ENCODE measurements at regions of chr3 and their contacts with region 1.

Region 1: DNA sequence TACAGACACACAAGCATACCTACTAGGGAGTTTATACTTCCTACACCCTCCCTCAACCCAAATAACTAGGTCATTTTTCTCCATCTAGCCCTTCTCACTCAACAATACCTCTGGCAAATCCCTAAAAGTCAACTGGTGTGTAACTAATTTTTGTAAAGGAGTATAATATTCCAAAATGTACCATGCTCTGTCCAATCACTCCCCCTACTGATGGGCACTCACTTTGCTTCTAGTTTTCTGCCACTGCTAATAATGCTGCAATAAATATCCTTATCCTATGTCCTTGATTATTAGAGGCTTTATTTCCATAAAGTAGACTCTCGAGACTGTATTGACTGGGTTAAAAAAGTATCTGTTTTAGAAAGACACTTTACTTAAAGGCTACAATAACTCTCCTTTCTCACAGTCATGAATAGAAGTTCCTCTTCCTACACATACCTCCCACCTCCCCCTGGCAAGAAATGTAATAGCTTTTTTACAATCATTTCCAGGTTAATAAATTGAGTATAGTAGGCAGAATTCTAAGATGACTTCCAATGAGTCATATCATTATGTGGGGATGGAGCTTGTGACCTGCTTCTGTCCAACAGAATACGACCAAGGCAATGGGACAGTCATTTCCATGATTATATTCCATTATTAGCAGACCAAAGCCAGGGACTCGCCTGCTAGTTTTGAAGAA is 30.0 kb downstream of the SHQ1 start:
- DNase-seq: no peak
- ATAC-seq: no peak

Region 2: DNA sequence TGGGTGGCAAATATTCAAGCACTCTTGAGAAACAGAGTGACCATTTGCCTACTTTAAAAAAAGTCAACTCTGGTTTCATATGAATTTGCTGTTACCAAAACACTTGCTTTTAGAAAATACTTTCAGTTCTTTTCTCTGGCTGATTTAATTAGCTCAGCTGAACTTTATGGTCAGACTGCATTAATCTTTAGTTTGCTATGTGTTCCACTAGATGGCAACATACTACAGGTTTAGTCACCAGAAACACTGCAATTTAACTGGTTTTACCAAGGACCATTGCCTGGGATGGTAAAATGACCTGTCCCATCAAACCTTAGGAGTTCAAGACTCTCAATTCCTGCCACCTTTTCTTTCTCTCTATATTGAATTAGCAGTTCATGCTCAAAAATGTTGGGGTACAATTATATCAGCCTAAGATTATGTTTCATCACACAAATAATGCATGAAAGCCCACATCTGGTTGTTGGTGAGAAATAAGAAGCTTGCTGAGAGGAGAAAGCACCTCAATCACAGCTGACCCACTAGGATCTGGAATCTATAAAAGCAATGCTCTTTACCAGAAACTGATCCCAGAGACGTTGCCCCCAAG is 1107.2 kb before region 1 on chr3:
- intact Hi-C with region 1: loop called in 1 of 2 experiments (anchors 10 kb)
- DNase-seq: no peak
- ATAC-seq: peak in 1 of 2 donors; percentile 68

Region 3: DNA sequence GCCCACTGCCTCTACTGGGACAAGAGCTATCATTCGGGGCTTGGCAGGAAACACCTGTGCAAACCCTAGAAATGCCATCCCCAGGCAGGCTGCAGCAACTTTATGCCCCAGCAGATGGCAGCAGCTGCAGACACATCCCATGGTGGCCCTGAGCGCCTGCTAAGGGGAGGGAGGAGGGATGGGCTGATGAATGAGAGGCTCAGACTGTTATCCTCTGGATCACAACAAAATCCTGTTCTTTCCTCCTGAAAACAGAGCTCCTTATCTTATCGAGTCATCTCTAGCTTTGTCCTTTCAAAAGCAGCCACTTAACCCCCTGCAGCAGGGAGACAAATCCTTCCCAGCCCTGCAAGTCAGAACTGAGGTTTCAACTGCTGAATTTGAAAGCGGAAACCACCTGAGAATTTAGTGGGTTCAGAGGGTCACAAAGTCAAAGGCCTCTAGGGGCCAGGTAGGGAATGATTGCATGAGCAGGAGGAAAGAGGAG is 942.7 kb before region 1 on chr3:
- intact Hi-C with region 1: loop called (anchors 5 to 10 kb)
- DNase-seq: peak; percentile 76
- ATAC-seq: peak; percentile 95

Region 4: GRCh38 chr3:71955240-71956068 is 862.8 kb before region 1 on chr3:
- intact Hi-C with region 1: loop called in 1 of 2 experiments (anchors 5 kb)
- DNase-seq: peak; percentile 76
- ATAC-seq: peak; percentile 79 to 81

Region 5: DNA sequence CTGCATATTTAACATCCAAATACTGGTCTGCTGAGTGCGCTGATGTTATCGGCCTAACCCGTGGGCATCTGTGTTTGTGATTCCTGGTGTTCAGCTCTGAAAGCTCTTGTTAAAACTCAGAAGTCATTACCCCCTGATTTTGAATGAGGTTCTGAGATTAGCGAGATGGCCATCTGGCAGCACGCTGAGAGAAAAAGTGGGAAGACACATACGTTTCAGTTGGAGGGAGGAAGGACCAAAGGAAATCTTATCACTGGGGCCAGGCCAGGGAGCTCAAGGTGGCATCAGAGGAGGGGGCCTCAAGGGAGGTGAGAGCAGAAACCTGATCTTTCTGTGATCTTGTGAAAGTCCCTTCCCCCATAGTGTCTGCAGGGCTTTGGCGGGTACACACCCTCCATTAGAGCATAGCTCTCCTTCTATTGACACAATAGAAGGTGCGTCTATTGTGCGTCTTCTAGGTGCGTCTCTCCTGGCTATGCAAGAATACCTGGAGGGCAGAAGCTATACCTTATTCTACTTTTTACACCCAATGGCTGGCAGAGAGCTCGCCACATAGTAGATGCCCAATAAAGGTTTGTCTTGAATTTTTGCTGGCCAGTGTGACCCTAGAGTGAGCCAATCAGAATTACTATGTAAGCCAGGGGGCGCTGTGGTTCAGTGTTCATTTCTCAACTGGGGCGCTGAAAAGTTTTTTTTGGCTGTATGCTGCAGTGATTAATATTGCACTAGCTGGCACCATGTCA is 152.4 kb before region 1 on chr3:
- intact Hi-C with region 1: loop called (anchors 5 to 10 kb)
- DNase-seq: peak; percentile 40
- ATAC-seq: peak; percentile 17 to 49

Measured in left cardiac atrium (tissue), 4 donors.